ENCODE measurements at regions of chr3 and their contacts with region 1.

Region 1: GRCh38 chr3:53729618-53730017 is 116.6 kb downstream of the CHDH start:
- DNase-seq: no peak
- ATAC-seq: peak in 3 of 4 donors; percentile 43 to 69 (median 50)
- H3K4me3 ChIP-seq: no peak overlapping the region
- H3K27ac ChIP-seq: no peak overlapping the region
- H3K4me1 ChIP-seq: peaks cover 0 to 10% (median 2%) of the 10 kb centered on the region in 12 donors
- H3K27me3 ChIP-seq: peaks cover 0 to 19% (median 0%) of the 10 kb centered on the region in 9 donors
- CTCF ChIP-seq: peak in 4 of 12 donors; percentile 12 to 34 (median 16)
- POLR2A ChIP-seq: no peak

Region 2: GRCh38 chr3:53794597-53794996 is 65.0 kb after region 1 on chr3:
- intact Hi-C with region 1: loop called in 1 of 10 experiments (anchors 5 kb)
- DNase-seq: no peak
- ATAC-seq: no peak
- H3K4me3 ChIP-seq: no peak overlapping the region
- H3K27ac ChIP-seq: no peak overlapping the region
- H3K4me1 ChIP-seq: peaks cover 0 to 7% (median 0%) of the 10 kb centered on the region in 12 donors
- H3K27me3 ChIP-seq: peaks cover 0 to 4% (median 0%) of the 10 kb centered on the region in 9 donors
- CTCF ChIP-seq: no peak
- POLR2A ChIP-seq: no peak